Mammary epithelial cell (primary cell): ENCODE measurements at regions of chr13 and their contacts with region 1.

Region 1: DNA sequence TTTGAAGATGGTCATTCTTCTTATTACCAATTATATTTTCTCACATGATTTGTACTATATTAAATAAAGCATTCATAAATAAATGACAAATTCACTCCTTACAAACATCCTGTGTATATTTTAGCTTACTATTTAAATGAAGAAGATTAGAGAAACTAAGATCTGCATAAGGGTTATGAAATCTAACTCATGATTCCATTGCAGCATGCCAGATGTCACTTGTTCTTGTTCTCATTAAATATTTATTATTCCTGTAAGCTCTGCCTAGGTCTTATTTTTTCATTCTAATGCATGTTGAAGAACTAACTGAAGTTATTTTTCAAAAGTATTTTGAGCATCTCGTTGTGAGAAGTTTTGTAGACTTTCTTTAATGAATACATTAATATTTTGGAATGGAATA is 18.3 kb downstream of the NUP58 start:
- DNase-seq: no peak
- H3K4me3 ChIP-seq: no peak overlapping the region
- H3K27ac ChIP-seq: peak overlapping the region; percentile 95
- H3K4me1 ChIP-seq: peaks cover 19% of the 10 kb centered on the region
- H3K27me3 ChIP-seq: no peaks in the 10 kb centered on the region
- CTCF ChIP-seq: no peak

Region 2: DNA sequence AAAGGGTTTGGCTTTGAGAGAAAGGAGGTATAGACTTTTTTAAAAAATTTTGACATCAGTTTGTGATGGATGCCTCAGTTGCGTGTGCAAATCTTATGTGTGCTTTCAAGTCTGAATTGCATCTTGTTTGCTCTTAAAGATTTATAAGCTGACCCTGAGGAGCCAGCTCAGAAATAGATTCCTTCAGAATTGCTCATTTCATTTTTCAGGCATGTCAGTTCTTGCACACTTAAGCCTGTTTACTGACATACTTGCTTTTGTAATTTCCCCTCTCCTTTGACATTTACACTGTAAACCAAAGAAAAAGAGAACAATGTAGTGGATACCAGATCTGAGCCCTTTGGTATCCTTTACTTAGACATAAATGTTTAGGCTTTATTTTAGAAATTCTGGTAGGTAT is 468.2 kb before region 1 on chr13:
- CTCF ChIA-PET with region 1: interaction called, 18 read pairs
- dilution Hi-C with region 1: no loop called
- in situ Hi-C with region 1: no loop called
- intact Hi-C with region 1: no loop called
- DNase-seq: peak; percentile 78
- H3K4me3 ChIP-seq: no peak overlapping the region
- H3K27ac ChIP-seq: peak overlapping the region; percentile 41
- H3K4me1 ChIP-seq: peaks cover 10% of the 10 kb centered on the region
- H3K27me3 ChIP-seq: no peaks in the 10 kb centered on the region
- CTCF ChIP-seq: no peak

Region 3: DNA sequence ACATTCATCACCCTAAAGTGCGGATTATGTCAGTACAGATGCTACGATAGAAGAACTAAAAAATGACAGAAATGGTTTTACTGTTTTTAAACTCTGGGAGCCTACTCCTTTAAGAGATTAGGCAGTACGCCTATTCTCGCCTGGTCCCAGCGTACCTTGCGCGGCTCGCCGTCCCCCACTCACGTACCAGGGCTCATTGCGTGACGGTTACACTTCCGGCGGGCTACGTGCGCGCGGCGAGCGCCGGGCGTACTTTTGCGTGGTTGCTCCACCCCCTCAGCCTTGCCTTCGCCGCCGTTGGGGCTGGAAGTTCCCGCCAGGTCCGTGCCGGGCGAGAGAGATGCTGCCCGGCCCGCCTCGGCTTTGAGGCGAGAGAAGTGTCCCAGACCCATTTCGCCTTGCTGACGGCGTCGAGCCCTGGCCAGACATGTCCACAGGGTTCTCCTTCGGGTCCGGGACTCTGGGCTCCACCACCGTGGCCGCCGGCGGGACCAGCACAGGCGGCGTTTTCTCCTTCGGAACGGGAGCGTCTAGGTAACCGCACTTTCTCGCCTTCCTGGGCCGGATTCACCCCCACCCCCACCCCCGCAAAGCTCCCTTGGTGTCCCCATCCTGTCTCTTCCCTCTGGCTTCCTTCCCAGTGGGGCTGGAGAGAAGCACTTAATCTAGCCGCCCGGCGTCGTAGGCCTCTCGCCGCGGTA is 18.3 kb before region 1 on chr13 and contains the start of gene NUP58:
- CTCF ChIA-PET with region 1: no interaction called
- dilution Hi-C with region 1: no loop called
- in situ Hi-C with region 1: no loop called
- intact Hi-C with region 1: loop called (anchors 2 kb)
- DNase-seq: peak; percentile 94
- H3K4me3 ChIP-seq: peak within 1 kb of the TSS; percentile 83 to 95 (median 87)
- H3K27ac ChIP-seq: peak within 1 kb of the TSS; percentile 86
- H3K4me1 ChIP-seq: peaks cover 14% of the 10 kb centered on the region
- H3K27me3 ChIP-seq: no peaks in the 10 kb centered on the region
- CTCF ChIP-seq: no peak
- total RNA-seq, gene NUP58: 73.0 to 82.0 TPM

Region 4: GRCh38 chr13:25652773-25653172 is 333.0 kb after region 1 on chr13:
- CTCF ChIA-PET with region 1: no interaction called
- dilution Hi-C with region 1: no loop called
- in situ Hi-C with region 1: no loop called
- intact Hi-C with region 1: no loop called
- DNase-seq: no peak
- H3K4me3 ChIP-seq: no peak overlapping the region
- H3K27ac ChIP-seq: no peak overlapping the region
- H3K4me1 ChIP-seq: no peaks in the 10 kb centered on the region
- H3K27me3 ChIP-seq: no peaks in the 10 kb centered on the region
- CTCF ChIP-seq: no peak